Activated CD4-positive, alpha-beta memory T cell treated with anti-CD3 and anti-CD28 coated beads, Interleukin-2, amount 10 ng/mL, durations not matched to agents 7 days and 5 days (primary cell): ENCODE measurements at regions of chr11 and their contacts with region 1.

Region 1: GRCh38 chr11:65314501-65315203 is at the start of gene CDC42EP2:
- DNase-seq: peak; percentile 81
- H3K4me3 Mint-ChIP-seq: peak within 1 kb of the TSS; percentile 69
- H3K27ac Mint-ChIP-seq: no peak within 1 kb of the TSS
- H3K4me1 Mint-ChIP-seq: peaks cover 11% of the 10 kb centered on the region
- H3K27me3 Mint-ChIP-seq: peaks cover 20% of the 10 kb centered on the region
- total RNA-seq, gene CDC42EP2: 0.38 to 0.70 TPM

Region 2: GRCh38 chr11:65111744-65112414 is 202.8 kb before region 1 on chr11 and contains the start of gene TM7SF2:
- CTCF ChIA-PET with region 1: interaction called, 16 read pairs
- POLR2A ChIA-PET with region 1: interaction called, 3 read pairs
- DNase-seq: peak; percentile 96
- H3K4me3 Mint-ChIP-seq: peak within 1 kb of the TSS; percentile 87
- H3K27ac Mint-ChIP-seq: peak within 1 kb of the TSS; percentile 80
- H3K4me1 Mint-ChIP-seq: peaks cover 49% of the 10 kb centered on the region
- H3K27me3 Mint-ChIP-seq: no peaks in the 10 kb centered on the region
- total RNA-seq, gene TM7SF2: 27.2 to 28.4 TPM

Region 3: DNA sequence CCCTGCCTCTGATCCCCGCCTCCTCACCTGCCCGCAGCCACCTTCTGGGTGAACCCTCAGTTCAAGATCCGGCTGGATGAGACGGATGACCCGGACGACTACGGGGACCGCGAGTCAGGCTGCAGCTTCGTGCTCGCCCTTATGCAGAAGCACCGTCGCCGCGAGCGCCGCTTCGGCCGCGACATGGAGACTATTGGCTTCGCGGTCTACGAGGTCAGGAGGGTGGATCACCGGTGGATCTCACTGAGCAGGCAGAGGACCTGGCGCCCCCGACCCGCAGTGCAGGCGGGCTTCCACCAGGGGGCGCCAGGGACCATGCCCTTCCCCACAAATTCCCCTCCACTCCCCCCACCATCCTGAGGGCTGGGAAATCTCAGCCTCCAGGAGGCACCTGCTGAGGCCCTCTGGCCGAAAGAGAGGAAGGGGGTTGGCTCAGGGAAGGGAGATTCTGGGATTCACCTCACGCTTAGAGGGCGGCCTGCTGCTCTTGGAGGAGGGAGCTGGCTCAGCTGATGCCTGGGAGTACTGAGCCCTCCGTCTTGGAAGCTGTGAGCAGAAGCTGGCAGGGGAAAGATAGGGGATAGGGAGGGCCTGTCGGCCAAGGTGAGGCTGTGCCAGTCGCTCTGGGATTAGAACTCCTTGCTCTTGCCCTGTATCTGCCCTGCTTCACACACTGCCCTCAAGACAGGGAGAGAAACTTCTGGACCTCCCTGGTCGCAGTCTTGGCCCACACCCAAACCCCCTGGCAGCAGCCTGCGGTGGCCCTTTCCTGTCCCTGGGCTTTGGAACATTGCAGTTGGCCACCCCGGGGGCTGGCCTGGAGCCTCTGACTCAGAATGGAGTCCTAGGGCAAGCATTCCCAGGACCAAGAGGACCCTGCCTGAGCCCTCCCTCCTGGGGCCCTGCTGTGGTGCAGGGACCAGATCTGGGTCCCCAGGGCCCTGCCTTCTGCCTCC is 109.7 kb before region 1 on chr11:
- CTCF ChIA-PET with region 1: interaction called, 17 read pairs
- POLR2A ChIA-PET with region 1: interaction called, 3 read pairs
- DNase-seq: peak; percentile 51
- H3K4me3 Mint-ChIP-seq: no peak overlapping the region
- H3K27ac Mint-ChIP-seq: no peak overlapping the region
- H3K4me1 Mint-ChIP-seq: peaks cover 7% of the 10 kb centered on the region
- H3K27me3 Mint-ChIP-seq: no peaks in the 10 kb centered on the region

Region 4: DNA sequence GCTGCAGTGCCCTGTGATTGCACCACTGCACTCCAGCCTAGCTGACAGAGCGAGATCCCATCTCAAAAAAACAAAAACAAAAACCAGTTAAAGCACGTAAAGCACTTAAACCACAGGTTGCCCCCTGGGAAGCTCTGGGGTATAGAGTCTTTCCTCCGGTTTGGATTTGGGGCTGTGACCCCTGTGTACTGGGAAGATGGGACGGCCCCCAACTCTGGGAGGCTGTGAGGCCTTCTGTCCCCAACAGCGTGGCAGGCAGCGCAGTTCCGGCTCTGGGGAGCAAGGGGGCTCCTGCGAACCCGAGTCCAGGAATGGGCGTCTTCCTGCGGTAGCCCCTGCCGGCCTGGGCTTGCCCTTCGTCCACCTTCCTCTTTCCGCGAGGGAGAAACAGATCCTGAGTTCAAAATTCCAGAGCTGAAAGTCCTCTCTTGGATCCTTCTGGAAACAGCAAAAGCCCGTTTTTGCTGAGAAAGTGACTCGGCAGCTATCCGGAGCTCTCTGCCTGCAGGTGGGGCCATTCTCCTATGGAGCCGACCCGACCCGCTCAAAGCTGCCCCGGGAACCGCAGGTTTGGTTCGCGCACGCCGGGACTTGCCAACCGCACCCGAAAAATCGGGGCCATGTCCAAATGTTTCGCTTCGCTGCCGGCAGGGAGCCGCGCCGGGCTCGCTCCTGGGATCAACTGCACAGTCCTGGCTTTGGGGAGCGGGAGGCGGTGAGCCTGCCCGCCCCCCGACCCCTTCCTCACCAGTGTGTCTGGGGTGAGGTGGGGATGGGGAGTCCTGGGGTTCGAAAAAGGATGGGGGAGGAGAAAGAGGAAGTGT is 89.2 kb before region 1 on chr11:
- CTCF ChIA-PET with region 1: interaction called, 49 read pairs
- POLR2A ChIA-PET with region 1: interaction called, 3 read pairs
- DNase-seq: peak; percentile 64
- H3K4me3 Mint-ChIP-seq: peak overlapping the region; percentile 62
- H3K27ac Mint-ChIP-seq: no peak overlapping the region
- H3K4me1 Mint-ChIP-seq: peaks cover 21% of the 10 kb centered on the region
- H3K27me3 Mint-ChIP-seq: peaks cover 31% of the 10 kb centered on the region

Region 5: GRCh38 chr11:65274735-65275682 is 39.6 kb before region 1 on chr11:
- CTCF ChIA-PET with region 1: interaction called, 43 read pairs
- POLR2A ChIA-PET with region 1: no interaction called
- DNase-seq: peak; percentile 39
- H3K4me3 Mint-ChIP-seq: no peak overlapping the region
- H3K27ac Mint-ChIP-seq: no peak overlapping the region
- H3K4me1 Mint-ChIP-seq: peaks cover 20% of the 10 kb centered on the region
- H3K27me3 Mint-ChIP-seq: no peaks in the 10 kb centered on the region

Region 6: GRCh38 chr11:65329944-65330403 is 15.3 kb after region 1 on chr11:
- CTCF ChIA-PET with region 1: interaction called, 172 read pairs
- POLR2A ChIA-PET with region 1: interaction called, 16 read pairs
- DNase-seq: peak; percentile 82
- H3K4me3 Mint-ChIP-seq: no peak overlapping the region
- H3K27ac Mint-ChIP-seq: no peak overlapping the region
- H3K4me1 Mint-ChIP-seq: peaks cover 14% of the 10 kb centered on the region
- H3K27me3 Mint-ChIP-seq: no peaks in the 10 kb centered on the region

Region 7: DNA sequence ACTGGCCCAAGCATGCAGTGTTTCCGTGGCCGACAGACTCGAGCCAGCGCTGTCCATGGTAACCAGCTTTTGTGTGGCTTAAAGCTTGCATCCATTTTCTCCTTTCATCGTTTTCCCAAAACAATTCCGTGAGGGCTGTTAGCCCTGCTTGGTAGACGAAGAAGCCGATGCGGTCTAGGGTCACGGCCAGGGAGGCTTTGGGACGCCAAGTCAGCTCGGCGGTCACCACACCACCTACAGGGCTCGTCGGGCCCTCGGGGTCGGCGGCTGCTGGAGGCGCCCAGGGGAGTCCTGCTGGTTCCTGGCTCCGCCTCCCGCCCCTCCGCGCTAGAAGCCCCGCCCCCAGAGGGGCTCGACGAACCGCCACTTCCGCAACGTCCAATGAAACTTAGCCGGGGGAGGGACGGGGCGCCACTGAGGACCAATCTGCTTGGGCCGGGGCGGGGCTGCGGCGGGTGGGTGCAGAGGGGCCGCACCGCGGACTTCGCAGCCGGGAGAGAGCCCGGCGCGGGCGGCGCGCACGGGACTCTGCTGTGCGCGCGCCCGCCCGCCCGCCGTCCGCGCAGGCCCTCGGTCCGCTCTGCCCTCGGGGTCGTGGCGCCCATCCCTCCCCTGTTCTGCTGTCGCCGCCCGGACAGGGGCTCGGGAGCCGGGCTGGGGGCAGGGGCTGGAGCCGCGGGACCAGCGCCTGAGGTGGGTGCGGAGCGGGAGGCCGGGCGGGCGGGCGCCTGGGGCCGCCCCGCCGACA is 39.8 kb after region 1 on chr11 and contains the start of gene TIGD3:
- CTCF ChIA-PET with region 1: interaction called, 11 read pairs
- POLR2A ChIA-PET with region 1: no interaction called
- DNase-seq: peak; percentile 96
- H3K4me3 Mint-ChIP-seq: peak within 1 kb of the TSS; percentile 83
- H3K27ac Mint-ChIP-seq: peak within 1 kb of the TSS; percentile 0
- H3K4me1 Mint-ChIP-seq: peaks cover 17% of the 10 kb centered on the region
- H3K27me3 Mint-ChIP-seq: peaks cover 8% of the 10 kb centered on the region
- total RNA-seq, gene TIGD3: 0.58 to 0.88 TPM